Mammary epithelial cell (primary cell): ENCODE measurements at regions of chr3 and their contacts with region 1.

Region 1: DNA sequence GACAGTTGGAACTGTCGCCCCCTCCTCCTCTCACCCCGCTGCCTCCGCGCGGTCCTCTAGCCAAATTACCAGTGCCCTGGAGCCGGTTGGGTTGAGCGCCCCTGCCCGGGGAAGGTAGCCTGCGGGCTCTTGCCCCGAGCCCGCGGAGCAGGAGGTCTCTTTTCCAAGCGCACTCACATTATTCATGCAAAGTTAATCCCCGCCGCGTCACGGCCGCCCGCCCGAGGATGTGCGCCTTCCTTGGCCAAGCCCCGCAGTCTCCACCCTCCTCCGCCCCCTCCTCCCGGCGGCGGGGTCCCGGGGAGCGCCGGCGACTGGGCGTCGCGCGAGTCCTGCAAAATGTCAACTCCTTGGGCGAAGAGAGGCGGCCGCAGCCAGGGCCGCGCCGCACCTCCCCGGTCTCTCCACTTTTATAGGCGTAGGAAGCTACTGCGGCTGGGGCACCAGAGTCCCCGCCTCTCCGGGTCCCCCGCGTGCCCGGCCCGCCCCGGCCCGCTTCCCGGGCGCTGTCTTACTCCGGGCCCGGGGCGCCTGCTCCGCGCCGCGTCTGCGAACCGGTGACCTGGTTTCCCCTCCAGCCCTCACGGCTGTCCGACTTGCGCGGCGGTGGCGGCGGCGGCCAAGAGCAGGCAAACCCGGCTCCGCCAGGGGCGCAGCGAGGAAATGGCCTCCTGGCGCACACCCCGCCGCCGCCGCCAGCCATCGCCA is at the start of gene THRB:
- DNase-seq: peak; percentile 77
- H3K4me3 ChIP-seq: peak within 1 kb of the TSS; percentile 79 to 97 (median 91)
- H3K27ac ChIP-seq: peak within 1 kb of the TSS; percentile 78
- H3K4me1 ChIP-seq: peaks cover 18% of the 10 kb centered on the region
- H3K27me3 ChIP-seq: no peaks in the 10 kb centered on the region
- CTCF ChIP-seq: peak in 1 of 2 donors; percentile 20
- total RNA-seq, gene THRB: 13.1 to 16.3 TPM

Region 2: GRCh38 chr3:23999012-23999641 is 495.6 kb before region 1 on chr3:
- CTCF ChIA-PET with region 1: no interaction called
- dilution Hi-C with region 1: no loop called
- in situ Hi-C with region 1: no loop called
- intact Hi-C with region 1: loop called (anchors 2 kb)
- DNase-seq: peak; percentile 33
- H3K4me3 ChIP-seq: no peak overlapping the region
- H3K27ac ChIP-seq: no peak overlapping the region
- H3K4me1 ChIP-seq: peaks cover under 1% of the 10 kb centered on the region
- H3K27me3 ChIP-seq: no peaks in the 10 kb centered on the region
- CTCF ChIP-seq: peak; percentile 96 to 100

Region 3: GRCh38 chr3:24177201-24177600 is 317.6 kb before region 1 on chr3:
- CTCF ChIA-PET with region 1: no interaction called
- dilution Hi-C with region 1: no loop called
- in situ Hi-C with region 1: no loop called
- intact Hi-C with region 1: no loop called
- DNase-seq: no peak
- H3K4me3 ChIP-seq: no peak overlapping the region
- H3K27ac ChIP-seq: no peak overlapping the region
- H3K4me1 ChIP-seq: no peaks in the 10 kb centered on the region
- H3K27me3 ChIP-seq: no peaks in the 10 kb centered on the region
- CTCF ChIP-seq: no peak

Region 4: DNA sequence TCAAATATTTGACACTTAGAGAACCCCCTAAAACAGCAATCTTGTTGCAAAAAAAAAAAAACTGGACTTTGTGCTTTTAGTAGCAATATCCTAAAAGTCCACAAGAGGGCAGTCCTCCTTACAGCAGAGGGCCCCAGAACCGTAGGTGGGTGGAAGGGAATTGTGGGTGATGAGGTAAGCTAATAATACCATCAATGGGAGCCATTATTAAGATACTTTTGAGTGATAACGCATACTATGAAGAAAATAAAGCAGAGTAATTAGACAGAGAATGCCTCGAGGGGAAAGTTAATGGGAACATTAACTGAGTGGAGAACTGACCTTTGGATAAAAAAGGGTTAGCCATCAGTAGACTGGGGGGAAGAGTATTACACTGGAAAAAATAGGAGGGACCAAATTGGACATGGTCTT is 230.0 kb before region 1 on chr3:
- CTCF ChIA-PET with region 1: no interaction called
- dilution Hi-C with region 1: no loop called
- in situ Hi-C with region 1: loop called in 1 of 2 experiments (anchors 25 kb)
- intact Hi-C with region 1: loop called (anchors 1 kb)
- DNase-seq: peak; percentile 29
- H3K4me3 ChIP-seq: no peak overlapping the region
- H3K27ac ChIP-seq: no peak overlapping the region
- H3K4me1 ChIP-seq: no peaks in the 10 kb centered on the region
- H3K27me3 ChIP-seq: no peaks in the 10 kb centered on the region
- CTCF ChIP-seq: peak; percentile 71 to 82

Region 5: GRCh38 chr3:24299806-24300626 is 194.8 kb before region 1 on chr3:
- CTCF ChIA-PET with region 1: no interaction called
- dilution Hi-C with region 1: no loop called
- in situ Hi-C with region 1: no loop called
- intact Hi-C with region 1: loop called (anchors 1 kb)
- DNase-seq: peak; percentile 88
- H3K4me3 ChIP-seq: no peak overlapping the region
- H3K27ac ChIP-seq: peak overlapping the region; percentile 62
- H3K4me1 ChIP-seq: peaks cover 26% of the 10 kb centered on the region
- H3K27me3 ChIP-seq: no peaks in the 10 kb centered on the region
- CTCF ChIP-seq: no peak

Region 6: GRCh38 chr3:24365194-24365612 is 129.6 kb before region 1 on chr3:
- CTCF ChIA-PET with region 1: interaction called, 7 read pairs
- dilution Hi-C with region 1: no loop called
- in situ Hi-C with region 1: no loop called
- intact Hi-C with region 1: loop called (anchors 2 kb)
- DNase-seq: peak; percentile 91
- H3K4me3 ChIP-seq: no peak overlapping the region
- H3K27ac ChIP-seq: peak overlapping the region; percentile 48
- H3K4me1 ChIP-seq: peaks cover 7% of the 10 kb centered on the region
- H3K27me3 ChIP-seq: no peaks in the 10 kb centered on the region
- CTCF ChIP-seq: peak in 1 of 2 donors; percentile 42

Region 7: DNA sequence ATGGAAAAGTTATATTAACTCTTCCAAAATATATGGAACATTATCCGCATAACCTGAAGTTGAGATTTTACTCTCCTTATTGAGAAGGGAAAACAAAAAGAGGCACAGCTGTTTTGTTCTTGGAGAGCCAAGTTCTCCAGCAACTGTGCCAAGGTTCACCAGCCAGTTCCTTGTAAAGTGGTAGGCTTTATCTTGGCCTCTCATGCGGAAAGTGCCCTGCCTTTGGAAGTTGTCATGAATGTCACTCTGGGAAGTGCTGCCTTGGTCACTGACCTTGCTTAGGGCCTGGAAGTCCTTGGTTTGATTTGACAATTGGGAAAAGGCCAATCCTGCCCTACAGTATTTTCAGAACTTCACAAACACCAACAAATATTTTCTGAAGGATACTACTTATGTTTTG is 44.1 kb after region 1 on chr3:
- CTCF ChIA-PET with region 1: no interaction called
- dilution Hi-C with region 1: no loop called
- in situ Hi-C with region 1: no loop called
- intact Hi-C with region 1: no loop called
- DNase-seq: no peak
- H3K4me3 ChIP-seq: no peak overlapping the region
- H3K27ac ChIP-seq: no peak overlapping the region
- H3K4me1 ChIP-seq: no peaks in the 10 kb centered on the region
- H3K27me3 ChIP-seq: no peaks in the 10 kb centered on the region
- CTCF ChIP-seq: no peak

Region 8: DNA sequence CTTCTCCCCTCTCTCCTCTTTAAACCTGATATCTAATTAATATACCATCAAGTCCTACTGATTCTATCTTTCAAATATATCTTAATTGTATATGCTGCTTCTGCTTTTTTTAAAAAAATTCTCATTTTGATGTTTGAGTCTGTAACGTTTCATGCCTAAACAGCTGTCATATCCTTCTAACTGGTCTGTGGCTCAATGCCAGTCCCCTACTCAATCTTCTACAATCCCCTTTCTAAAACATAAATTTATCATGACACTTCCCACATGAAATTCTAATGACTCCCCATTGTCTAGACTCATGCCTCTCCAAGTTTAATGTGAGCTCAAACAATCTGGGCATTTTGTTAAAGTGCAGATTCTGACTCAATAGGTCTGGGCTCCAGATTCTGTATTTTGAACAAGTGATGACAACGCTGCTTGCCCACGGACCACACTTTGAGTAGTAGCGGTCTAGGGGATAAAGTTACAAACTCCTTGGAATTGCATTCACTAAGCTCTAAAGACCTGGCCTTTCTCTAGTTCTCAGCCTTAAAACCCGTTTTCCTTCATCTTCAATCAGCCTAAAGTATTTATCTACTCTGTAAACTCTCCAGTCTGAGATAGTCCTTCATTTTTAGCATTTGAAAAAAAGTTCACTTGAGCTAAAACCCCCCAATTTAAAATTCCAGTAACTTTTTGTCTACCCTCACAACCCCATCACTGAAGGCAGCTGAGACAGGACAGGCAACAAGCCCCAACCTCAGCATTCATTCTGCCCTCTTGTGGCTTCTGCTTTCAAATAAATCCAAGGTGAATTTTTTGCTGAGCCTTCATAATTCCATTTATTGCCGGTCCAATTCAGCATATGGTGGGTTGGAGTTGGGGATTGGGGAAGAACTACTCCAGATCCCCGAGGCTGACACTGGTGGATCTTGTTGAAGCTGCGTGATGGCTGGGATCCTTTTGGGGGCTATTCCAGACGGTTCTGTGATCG is 87.9 kb after region 1 on chr3:
- CTCF ChIA-PET with region 1: interaction called, 3 read pairs
- dilution Hi-C with region 1: no loop called
- in situ Hi-C with region 1: no loop called
- intact Hi-C with region 1: loop called (anchors 2 kb)
- DNase-seq: no peak
- H3K4me3 ChIP-seq: no peak overlapping the region
- H3K27ac ChIP-seq: no peak overlapping the region
- H3K4me1 ChIP-seq: no peaks in the 10 kb centered on the region
- H3K27me3 ChIP-seq: no peaks in the 10 kb centered on the region
- CTCF ChIP-seq: peak in 1 of 2 donors; percentile 60

Region 9: GRCh38 chr3:24598695-24599470 is 104.1 kb after region 1 on chr3:
- CTCF ChIA-PET with region 1: no interaction called
- dilution Hi-C with region 1: no loop called
- in situ Hi-C with region 1: no loop called
- intact Hi-C with region 1: loop called (anchors 5 kb)
- DNase-seq: peak; percentile 87
- H3K4me3 ChIP-seq: no peak overlapping the region
- H3K27ac ChIP-seq: peak overlapping the region; percentile 93
- H3K4me1 ChIP-seq: peaks cover 36% of the 10 kb centered on the region
- H3K27me3 ChIP-seq: no peaks in the 10 kb centered on the region
- CTCF ChIP-seq: no peak